Activated naive CD4-positive, alpha-beta T cell treated with anti-CD3 and anti-CD28 coated beads for 36 hours (primary cell): ENCODE measurements at regions of chr16 and their contacts with region 1.

Region 1: DNA sequence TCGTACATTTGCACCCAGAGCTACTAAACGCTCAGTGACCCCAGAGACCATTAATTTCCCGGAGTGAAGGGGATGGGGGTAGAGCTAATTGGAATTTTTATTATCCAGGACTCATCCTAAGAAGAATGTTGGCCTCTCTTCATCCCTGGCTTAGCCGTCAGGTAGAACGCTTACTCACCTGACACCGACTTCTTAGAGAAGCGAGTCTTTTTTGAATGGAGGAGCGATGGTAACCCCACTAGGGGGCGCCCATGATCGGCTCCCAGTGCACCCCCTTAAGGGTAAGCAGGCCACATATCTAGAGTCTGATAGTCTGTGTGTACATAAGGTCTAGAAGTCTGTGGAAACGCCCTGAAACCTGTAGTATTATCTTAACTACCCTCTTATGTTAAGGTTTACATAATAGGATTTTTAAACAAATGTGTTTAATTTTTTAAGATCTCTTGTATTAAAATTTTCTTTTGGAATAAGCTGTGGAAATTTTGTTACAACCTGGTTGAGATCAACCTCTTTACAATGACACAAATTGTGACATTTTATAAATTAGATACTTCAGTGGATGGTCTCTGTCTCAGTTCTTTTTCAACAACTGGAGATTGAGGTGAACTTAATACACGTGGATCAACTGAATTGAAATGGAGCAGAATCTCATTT is 229.8 kb downstream of the CPPED1 start:
- DNase-seq: peak; percentile 84
- H3K4me3 Mint-ChIP-seq: no peak overlapping the region
- H3K27ac Mint-ChIP-seq: no peak overlapping the region
- H3K4me1 Mint-ChIP-seq: peaks cover 4% of the 10 kb centered on the region
- H3K27me3 Mint-ChIP-seq: no peaks in the 10 kb centered on the region

Region 2: DNA sequence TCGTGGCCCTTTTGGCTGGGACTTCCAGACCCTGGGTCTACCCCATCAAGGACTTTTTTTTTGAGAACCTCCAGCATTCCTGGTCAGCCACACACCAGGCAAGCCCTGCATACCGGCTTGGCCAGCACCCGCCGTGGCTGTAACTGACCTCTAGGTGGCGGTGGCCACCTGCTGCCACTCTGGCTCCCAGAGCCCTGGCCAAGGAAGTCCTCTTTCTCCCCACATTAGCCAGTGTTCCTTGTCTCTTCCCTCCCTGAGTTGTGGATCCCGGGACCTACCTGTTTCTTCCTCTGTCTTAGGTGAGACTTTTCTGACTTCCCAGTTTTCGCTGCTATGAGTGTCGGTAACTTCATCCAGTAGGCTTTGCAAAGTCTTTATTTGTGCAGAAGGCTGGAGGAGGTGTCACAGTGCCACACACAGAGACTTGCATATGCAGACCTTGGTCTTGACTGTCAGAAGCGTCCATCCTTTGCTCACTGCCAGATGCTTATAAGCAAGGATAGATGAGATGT is 118.5 kb before region 1 on chr16:
- CTCF ChIA-PET with region 1: interaction called, 4 read pairs
- intact Hi-C with region 1: loop called (anchors 5 kb)
- DNase-seq: peak; percentile 65
- H3K4me3 Mint-ChIP-seq: no peak overlapping the region
- H3K27ac Mint-ChIP-seq: no peak overlapping the region
- H3K4me1 Mint-ChIP-seq: peaks cover 24% of the 10 kb centered on the region
- H3K27me3 Mint-ChIP-seq: no peaks in the 10 kb centered on the region

Region 3: GRCh38 chr16:12699161-12699560 is 125.3 kb after region 1 on chr16:
- CTCF ChIA-PET with region 1: no interaction called
- intact Hi-C with region 1: loop called (anchors 10 kb)
- DNase-seq: no peak
- H3K4me3 Mint-ChIP-seq: no peak overlapping the region
- H3K27ac Mint-ChIP-seq: no peak overlapping the region
- H3K4me1 Mint-ChIP-seq: peaks cover 11% of the 10 kb centered on the region
- H3K27me3 Mint-ChIP-seq: no peaks in the 10 kb centered on the region

Region 4: GRCh38 chr16:12758031-12758701 is 184.3 kb after region 1 on chr16:
- CTCF ChIA-PET with region 1: no interaction called
- intact Hi-C with region 1: loop called (anchors 10 kb)
- DNase-seq: no peak
- H3K4me3 Mint-ChIP-seq: no peak overlapping the region
- H3K27ac Mint-ChIP-seq: no peak overlapping the region
- H3K4me1 Mint-ChIP-seq: no peaks in the 10 kb centered on the region
- H3K27me3 Mint-ChIP-seq: no peaks in the 10 kb centered on the region

Region 5: DNA sequence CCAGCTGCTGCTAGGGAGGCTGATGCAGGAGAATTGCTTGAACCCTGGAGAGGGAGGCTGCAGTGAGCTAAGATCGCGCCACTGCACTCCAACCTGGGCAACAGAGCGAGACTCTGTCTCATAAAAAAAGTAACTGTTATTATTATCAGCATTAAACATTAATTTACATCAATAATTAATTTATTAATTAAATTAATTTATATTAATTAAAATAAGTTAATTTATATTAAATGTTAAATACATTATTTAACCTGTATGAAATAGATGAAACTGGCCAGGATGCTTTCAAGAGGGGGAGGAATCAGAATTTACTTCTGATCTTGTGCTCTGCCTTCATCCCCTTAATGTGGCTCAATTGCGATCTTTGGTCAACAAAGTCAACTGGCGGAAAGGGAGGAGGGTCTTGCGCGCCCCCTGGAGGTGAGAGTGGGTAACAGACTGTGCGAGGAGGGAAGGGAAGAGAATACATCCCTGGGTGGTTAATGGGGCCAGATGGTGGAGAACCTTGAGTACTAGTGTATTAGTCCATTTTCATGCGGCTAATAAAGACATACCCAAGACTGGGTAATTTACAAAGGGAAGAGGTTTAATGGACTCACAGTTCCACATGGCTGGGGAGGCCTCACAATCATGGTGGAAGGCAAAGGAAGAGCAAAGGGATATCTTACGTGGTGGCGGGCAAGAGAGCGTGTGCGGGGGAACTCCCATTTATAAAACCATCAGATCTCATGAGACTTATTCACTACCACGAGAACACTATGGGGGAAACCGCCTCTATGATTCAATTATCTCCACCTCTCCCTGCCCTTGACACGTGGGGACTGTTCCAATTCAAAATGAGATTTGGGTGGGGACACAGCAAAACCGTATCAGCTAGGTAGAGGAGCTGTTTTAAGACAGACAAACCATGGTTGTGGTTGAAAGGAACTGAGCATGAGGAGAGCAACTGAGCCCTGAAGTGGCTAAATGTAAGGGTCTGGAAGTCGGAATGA is 245.6 kb after region 1 on chr16:
- CTCF ChIA-PET with region 1: interaction called, 23 read pairs
- intact Hi-C with region 1: loop called (anchors 1 kb)
- DNase-seq: peak; percentile 88
- H3K4me3 Mint-ChIP-seq: no peak overlapping the region
- H3K27ac Mint-ChIP-seq: no peak overlapping the region
- H3K4me1 Mint-ChIP-seq: no peaks in the 10 kb centered on the region
- H3K27me3 Mint-ChIP-seq: no peaks in the 10 kb centered on the region